CD8-positive, alpha-beta T cell (primary cell): ENCODE measurements at regions of chr12 and their contacts with region 1.

Region 1: DNA sequence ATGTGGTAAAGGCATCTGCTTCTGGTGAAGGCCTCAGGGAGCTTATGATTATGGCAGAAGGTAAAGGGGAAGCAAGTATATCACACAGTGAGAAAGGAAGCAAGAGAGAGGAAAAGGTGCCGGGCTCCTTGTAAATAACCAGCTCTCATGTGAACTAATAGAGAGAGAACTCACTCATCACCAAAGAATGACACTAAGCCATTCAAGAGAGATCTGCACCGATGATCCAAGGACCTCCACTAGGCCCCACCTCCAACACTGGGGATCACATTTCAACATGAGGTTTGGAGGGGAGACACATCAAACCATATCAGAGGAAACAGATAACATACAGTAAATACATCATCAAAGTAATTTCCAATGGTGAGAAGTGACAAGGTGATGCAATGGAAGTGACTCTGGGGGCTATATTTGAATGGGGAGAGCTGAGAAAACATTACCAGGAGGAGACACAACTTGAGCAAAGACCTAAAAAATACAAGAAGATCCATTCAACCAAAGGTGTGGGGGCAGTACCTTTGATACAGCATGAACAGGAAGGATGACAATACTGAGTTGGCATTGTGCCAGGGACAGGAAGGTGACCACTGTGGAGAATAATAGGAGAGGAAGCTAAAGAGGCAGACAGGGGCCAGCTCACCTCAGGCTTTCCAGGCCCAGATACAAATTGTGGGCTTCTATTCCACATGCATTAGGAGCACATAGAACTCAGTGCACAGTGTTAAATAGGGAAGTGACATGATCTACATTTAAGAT is 134.4 kb upstream of the GRIP1 start:
- DNase-seq: peak in 3 of 9 experiments; percentile 18 to 53 (median 25)
- ATAC-seq: no peak
- H3K4me3 ChIP-seq: no peak overlapping the region
- H3K4me3 Mint-ChIP-seq: no peak overlapping the region
- H3K27ac ChIP-seq: no peak overlapping the region
- H3K27ac Mint-ChIP-seq: no peak overlapping the region
- H3K4me1 ChIP-seq: peaks cover 8% of the 10 kb centered on the region
- H3K4me1 Mint-ChIP-seq: peaks cover 13% of the 10 kb centered on the region
- H3K27me3 ChIP-seq: no peaks in the 10 kb centered on the region
- H3K27me3 Mint-ChIP-seq: no peaks in the 10 kb centered on the region
- CTCF ChIP-seq: no peak

Region 2: DNA sequence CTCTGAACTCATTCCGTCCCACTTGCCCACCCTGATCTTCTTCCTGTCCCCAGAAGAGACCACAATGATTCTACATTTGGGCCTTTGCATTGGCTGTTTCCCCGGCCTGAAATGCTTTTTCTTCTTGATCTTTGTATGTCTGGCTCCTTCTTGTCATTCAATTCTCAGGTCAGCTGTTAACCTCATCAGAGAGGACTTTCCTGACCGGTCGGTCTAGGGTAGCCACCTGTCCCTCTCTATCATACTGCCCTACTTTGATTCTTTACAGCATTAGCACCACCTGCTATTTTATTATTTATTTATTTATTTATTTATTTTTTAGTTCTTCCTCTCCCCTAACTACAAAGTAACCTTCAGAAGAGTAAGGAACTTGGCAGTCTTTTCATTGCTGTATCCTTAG is 919.5 kb after region 1 on chr12:
- CTCF ChIA-PET with region 1: no interaction called
- POLR2A ChIA-PET with region 1: no interaction called
- intact Hi-C with region 1: loop called in 1 of 2 experiments (anchors 5 kb)
- DNase-seq: no peak
- ATAC-seq: no peak
- H3K4me3 ChIP-seq: no peak overlapping the region
- H3K4me3 Mint-ChIP-seq: no peak overlapping the region
- H3K27ac ChIP-seq: no peak overlapping the region
- H3K27ac Mint-ChIP-seq: no peak overlapping the region
- H3K4me1 ChIP-seq: no peaks in the 10 kb centered on the region
- H3K4me1 Mint-ChIP-seq: no peaks in the 10 kb centered on the region
- H3K27me3 ChIP-seq: no peaks in the 10 kb centered on the region
- H3K27me3 Mint-ChIP-seq: no peaks in the 10 kb centered on the region
- CTCF ChIP-seq: no peak